Caco-2 (cell line): ENCODE measurements at regions of chr9 and their contacts with region 1.

Region 1: DNA sequence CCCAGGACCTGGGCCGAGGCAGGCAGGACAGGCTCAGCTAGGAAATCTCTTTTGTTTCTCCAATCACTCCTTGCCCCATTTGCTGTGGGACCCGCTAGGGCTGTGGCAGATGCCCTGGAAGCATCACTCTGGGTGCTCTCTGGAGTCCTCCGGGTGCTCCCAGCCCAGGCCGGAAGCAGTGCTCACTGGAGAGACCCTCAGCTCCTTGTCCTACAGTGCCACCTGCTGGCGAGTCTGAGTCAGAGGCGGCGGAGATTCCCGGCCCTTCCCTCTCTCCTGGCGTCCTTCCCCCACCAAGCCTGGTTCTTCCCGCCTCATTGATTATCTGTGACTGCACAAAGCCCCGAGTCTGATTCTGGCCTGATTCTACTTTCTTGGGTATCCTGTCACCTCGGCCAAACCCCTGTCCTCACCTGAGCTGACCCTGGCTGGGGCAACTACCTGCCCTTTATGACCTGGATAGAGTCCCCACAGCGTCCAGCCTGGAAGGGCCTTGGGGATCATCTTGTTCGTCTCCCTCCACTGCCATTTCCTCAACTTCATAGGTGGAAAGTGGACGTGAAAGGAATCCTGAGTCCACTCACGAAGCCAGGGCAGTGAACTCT is 7.3 kb upstream of the BARHL1 start:
- DNase-seq: peak; percentile 82 to 85
- H3K4me3 ChIP-seq: no peak overlapping the region
- H3K4me3 Mint-ChIP-seq: no peak overlapping the region
- H3K27ac Mint-ChIP-seq: no peak overlapping the region
- H3K4me1 ChIP-seq: no peaks in the 10 kb centered on the region
- H3K4me1 Mint-ChIP-seq: no peaks in the 10 kb centered on the region
- H3K27me3 ChIP-seq: no peaks in the 10 kb centered on the region
- H3K27me3 Mint-ChIP-seq: peaks cover 26% of the 10 kb centered on the region
- CTCF ChIP-seq: peak; percentile 82 to 86

Region 2: GRCh38 chr9:132507746-132508469 is 67.2 kb before region 1 on chr9:
- CTCF ChIA-PET with region 1: interaction called, 9 read pairs
- POLR2A ChIA-PET with region 1: no interaction called
- intact Hi-C with region 1: loop called (anchors 1 kb)
- DNase-seq: peak; percentile 72 to 77
- H3K4me3 ChIP-seq: no peak overlapping the region
- H3K4me3 Mint-ChIP-seq: no peak overlapping the region
- H3K27ac Mint-ChIP-seq: no peak overlapping the region
- H3K4me1 ChIP-seq: no peaks in the 10 kb centered on the region
- H3K4me1 Mint-ChIP-seq: no peaks in the 10 kb centered on the region
- H3K27me3 ChIP-seq: no peaks in the 10 kb centered on the region; the same call in 1 of the 2 replicates
- H3K27me3 Mint-ChIP-seq: peaks cover 9% of the 10 kb centered on the region
- CTCF ChIP-seq: peak; percentile 82 to 85

Region 3: GRCh38 chr9:132546148-132547051 is 28.7 kb before region 1 on chr9:
- CTCF ChIA-PET with region 1: no interaction called
- POLR2A ChIA-PET with region 1: no interaction called
- intact Hi-C with region 1: loop called (anchors 1 kb)
- DNase-seq: peak in 1 of 2 experiments; percentile 17
- H3K4me3 ChIP-seq: peak overlapping the region; percentile 23
- H3K4me3 Mint-ChIP-seq: peak overlapping the region; percentile 58
- H3K27ac Mint-ChIP-seq: no peak overlapping the region
- H3K4me1 ChIP-seq: no peaks in the 10 kb centered on the region
- H3K4me1 Mint-ChIP-seq: no peaks in the 10 kb centered on the region
- H3K27me3 ChIP-seq: no peaks in the 10 kb centered on the region
- H3K27me3 Mint-ChIP-seq: peaks cover 3% of the 10 kb centered on the region
- CTCF ChIP-seq: peak; percentile 57 to 65